AG04450 (cell line): ENCODE measurements at regions of chr15 and their contacts with region 1.

Region 1: DNA sequence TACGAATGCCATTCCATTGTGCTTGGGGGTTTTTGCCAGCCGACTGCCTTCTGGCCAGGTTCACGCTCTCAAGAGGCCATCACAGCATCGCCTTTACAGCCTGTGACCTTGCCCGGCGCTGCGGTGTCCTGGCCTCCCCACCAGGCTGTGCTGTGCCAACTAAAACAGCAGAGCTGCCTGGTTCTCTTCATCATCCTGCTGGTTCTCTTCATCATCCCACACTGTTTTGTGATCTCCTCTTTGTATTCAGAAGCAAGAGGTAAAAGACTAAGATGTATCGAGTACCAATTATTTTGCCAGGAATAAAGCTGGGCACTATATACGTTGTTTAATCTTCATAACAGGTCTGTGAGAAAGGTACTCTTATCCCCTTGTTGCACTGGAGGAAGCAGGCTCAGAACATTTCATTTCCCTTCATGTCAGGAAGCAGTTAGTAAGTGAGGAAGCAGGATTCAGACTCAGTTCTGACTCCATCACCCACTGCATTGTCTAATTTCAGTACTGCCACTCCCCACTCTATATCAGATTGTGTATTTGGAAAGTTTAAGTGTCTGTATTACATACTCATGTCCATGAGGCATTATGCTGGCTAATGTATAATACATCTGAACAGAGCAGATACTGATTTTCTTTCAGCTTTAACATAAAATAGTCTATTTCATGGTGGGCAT is 92.7 kb downstream of the LRRC28 start:
- DNase-seq: no peak
- H3K4me3 ChIP-seq: no peak overlapping the region
- H3K27ac ChIP-seq: no peak overlapping the region
- H3K27me3 ChIP-seq: no peaks in the 10 kb centered on the region
- CTCF ChIP-seq: peak; percentile 15; the same call in 1 of the 2 replicates

Region 2: DNA sequence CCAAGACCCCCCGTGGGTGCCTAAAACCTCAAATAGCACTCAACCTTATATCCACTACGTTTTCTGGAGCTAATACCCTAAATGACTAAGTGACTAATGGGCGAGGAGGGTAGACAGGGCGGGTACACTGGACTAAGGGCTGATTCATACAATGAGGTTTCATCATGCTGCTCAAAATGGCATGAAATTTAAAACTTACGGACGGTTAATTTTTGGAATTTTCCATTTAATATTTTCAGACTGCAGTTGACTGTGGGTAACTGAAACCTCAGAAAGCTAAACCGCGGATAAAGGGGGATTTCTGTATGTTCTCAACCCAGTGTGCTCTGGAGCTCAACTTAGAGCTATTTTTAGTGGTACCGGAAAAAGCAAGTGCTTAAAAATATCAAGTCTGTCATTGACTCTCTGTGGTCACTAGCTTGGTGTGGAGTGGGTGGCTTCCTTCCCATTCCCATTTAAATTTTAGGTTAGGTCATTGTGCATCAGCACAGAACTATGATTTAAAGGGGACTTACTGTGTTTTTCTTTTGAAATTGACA is 19.9 kb before region 1 on chr15:
- CTCF ChIA-PET with region 1: no interaction called
- POLR2A ChIA-PET with region 1: interaction called, 10 read pairs
- DNase-seq: peak; percentile 20
- H3K4me3 ChIP-seq: peak overlapping the region; percentile 29
- H3K27ac ChIP-seq: peak overlapping the region; percentile 53
- H3K27me3 ChIP-seq: no peaks in the 10 kb centered on the region
- CTCF ChIP-seq: no peak